CD4-positive, alpha-beta memory T cell (primary cell): ENCODE measurements at regions of chr6 and their contacts with region 1.

Region 1: GRCh38 chr6:27078734-27079357 is 168.7 kb upstream of the PRSS16 start:
- DNase-seq: peak; percentile 36 to 52 (median 46)
- H3K4me3 ChIP-seq: no peak overlapping the region
- H3K4me3 Mint-ChIP-seq: peak overlapping the region; percentile 35 to 82 (median 76)
- H3K27ac ChIP-seq: no peak overlapping the region
- H3K27ac Mint-ChIP-seq: no peak overlapping the region
- H3K4me1 ChIP-seq: peaks cover 5% of the 10 kb centered on the region
- H3K4me1 Mint-ChIP-seq: peaks cover 0 to 7% (median 5%) of the 10 kb centered on the region in 4 donors
- H3K27me3 ChIP-seq: peaks cover 10% of the 10 kb centered on the region
- H3K27me3 Mint-ChIP-seq: peaks cover 21 to 35% of the 10 kb centered on the region in 2 donors

Region 2: GRCh38 chr6:26607434-26608230 is 471.2 kb before region 1 on chr6:
- CTCF ChIA-PET with region 1: interaction called, 56 read pairs
- POLR2A ChIA-PET with region 1: no interaction called
- intact Hi-C with region 1: loop called (anchors 1 kb)
- DNase-seq: peak; percentile 68 to 74 (median 70)
- H3K4me3 ChIP-seq: peak overlapping the region; percentile 0 to 34
- H3K4me3 Mint-ChIP-seq: peak overlapping the region; percentile 69 to 85 (median 81)
- H3K27ac ChIP-seq: no peak overlapping the region
- H3K27ac Mint-ChIP-seq: peak overlapping the region; percentile 9 to 88 (median 70)
- H3K4me1 ChIP-seq: peaks cover 9% of the 10 kb centered on the region
- H3K4me1 Mint-ChIP-seq: peaks cover 8 to 19% (median 9%) of the 10 kb centered on the region in 4 donors
- H3K27me3 ChIP-seq: no peaks in the 10 kb centered on the region
- H3K27me3 Mint-ChIP-seq: peaks cover 0 to 6% of the 10 kb centered on the region in 2 donors